ENCODE measurements at regions of chr12 and their contacts with region 1.

Region 1: GRCh38 chr12:25386831-25387731 is 136.4 kb upstream of the KRAS start:
- DNase-seq: peak; percentile 92
- ATAC-seq: peak; percentile 8; the same call in 1 of the 2 replicates
- H3K4me3 ChIP-seq: peak overlapping the region; percentile 55
- H3K27ac ChIP-seq: peak overlapping the region; percentile 85
- H3K4me1 ChIP-seq: no peaks in the 10 kb centered on the region; the same call in 1 of the 2 replicates
- H3K27me3 ChIP-seq: no peaks in the 10 kb centered on the region
- CTCF ChIP-seq: peak; percentile 95
- POLR2A ChIP-seq: peak; percentile 78
- RAD21 ChIP-seq: peak; percentile 89

Region 2: DNA sequence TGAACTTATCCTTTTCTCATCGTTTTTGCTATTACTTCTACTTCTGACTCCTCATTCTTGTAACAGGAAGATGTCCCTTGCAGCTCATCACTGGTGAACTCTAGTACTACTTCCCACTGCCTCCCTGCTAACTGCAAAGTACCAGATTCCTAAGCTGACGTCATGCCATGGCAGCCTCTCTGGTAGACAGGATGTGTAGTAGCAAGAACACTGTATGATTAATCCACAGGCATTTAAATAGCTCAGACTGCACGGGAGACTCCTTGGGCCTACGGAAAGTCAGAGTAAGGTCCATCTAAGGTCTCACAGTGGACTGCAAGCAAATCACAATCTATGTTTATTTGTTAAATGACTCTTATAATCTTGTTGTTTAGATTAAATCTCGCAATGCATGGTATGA is 235.6 kb before region 1 on chr12:
- CTCF ChIA-PET with region 1: no interaction called
- POLR2A ChIA-PET with region 1: no interaction called
- dilution Hi-C with region 1: no loop called
- in situ Hi-C with region 1: no loop called
- intact Hi-C with region 1: loop called (anchors 1 kb)
- DNase-seq: peak; percentile 100
- ATAC-seq: peak; percentile 98
- H3K4me3 ChIP-seq: no peak overlapping the region
- H3K27ac ChIP-seq: peak overlapping the region; percentile 92
- H3K4me1 ChIP-seq: peaks cover 16% of the 10 kb centered on the region
- H3K27me3 ChIP-seq: no peaks in the 10 kb centered on the region
- CTCF ChIP-seq: no peak
- POLR2A ChIP-seq: no peak
- RAD21 ChIP-seq: peak; percentile 15

Region 3: DNA sequence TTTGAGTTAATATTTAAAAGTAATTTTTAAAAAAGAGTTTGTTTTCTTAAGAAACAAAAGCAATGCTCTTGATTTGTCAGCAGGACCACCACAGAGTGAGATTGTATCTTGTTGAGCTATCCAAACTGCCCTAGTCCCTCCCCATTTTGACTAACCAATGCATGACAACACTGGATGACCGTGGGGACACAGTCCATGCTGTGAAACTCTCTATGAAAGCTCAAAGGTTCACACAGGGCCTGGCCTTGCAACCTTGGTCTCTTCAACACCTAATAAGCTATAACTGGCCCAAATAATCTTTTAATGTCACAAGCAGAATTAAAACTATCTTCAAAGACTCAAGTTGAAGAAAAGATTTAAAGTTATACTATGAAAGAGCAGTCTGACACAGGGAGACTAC is 178.5 kb before region 1 on chr12:
- CTCF ChIA-PET with region 1: interaction called, 3 read pairs
- POLR2A ChIA-PET with region 1: no interaction called
- dilution Hi-C with region 1: no loop called
- in situ Hi-C with region 1: no loop called
- intact Hi-C with region 1: loop called (anchors 1 kb)
- DNase-seq: no peak
- ATAC-seq: no peak
- H3K4me3 ChIP-seq: no peak overlapping the region
- H3K27ac ChIP-seq: no peak overlapping the region; the same call in 1 of the 2 replicates
- H3K4me1 ChIP-seq: no peaks in the 10 kb centered on the region
- H3K27me3 ChIP-seq: no peaks in the 10 kb centered on the region
- CTCF ChIP-seq: no peak
- POLR2A ChIP-seq: no peak
- RAD21 ChIP-seq: no peak

Region 4: DNA sequence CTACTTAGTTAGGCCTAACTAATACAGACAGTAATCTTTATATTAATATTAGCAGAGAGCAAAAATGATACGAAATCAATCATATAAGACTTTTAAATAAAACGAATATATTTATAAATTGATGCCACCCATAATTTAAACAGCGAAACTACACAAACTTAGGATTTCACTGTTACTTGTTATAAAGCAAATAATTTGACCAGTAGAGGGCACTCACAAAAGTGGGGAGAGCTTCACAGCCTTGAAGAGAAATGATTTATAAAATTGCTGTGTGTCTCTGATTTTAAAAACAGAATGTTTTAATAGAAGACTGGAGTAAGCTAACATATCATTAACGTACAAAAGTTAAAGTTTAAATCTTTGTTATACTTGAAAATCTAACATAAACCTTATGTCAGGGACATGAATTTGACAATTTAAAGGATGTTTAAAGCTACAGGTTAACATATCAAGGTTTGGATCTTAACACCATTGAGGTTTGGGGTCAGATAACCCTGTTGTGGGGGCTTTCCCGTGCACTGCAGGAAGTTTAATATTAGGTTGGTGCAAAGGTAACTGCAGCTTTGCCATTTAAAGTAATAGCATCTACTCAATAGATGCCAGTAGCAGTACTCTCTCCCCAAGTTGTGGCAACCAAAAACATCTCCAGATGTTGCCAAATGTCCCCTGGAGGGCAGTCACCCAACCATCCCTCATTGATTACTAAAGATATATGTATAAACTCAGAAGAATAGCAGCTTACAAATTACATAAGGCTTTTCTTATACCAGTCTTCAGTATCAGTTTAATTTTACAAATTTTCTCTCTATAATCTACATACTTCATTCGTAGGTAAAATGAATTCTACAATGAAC is 145.7 kb before region 1 on chr12:
- CTCF ChIA-PET with region 1: interaction called, 3 read pairs
- POLR2A ChIA-PET with region 1: no interaction called
- dilution Hi-C with region 1: no loop called
- in situ Hi-C with region 1: loop called (anchors 5 kb)
- intact Hi-C with region 1: loop called (anchors 1 kb)
- DNase-seq: peak; percentile 71
- ATAC-seq: peak; percentile 68
- H3K4me3 ChIP-seq: no peak overlapping the region
- H3K27ac ChIP-seq: peak overlapping the region; percentile 13; the same call in 1 of the 2 replicates
- H3K4me1 ChIP-seq: peaks cover 5% of the 10 kb centered on the region
- H3K27me3 ChIP-seq: no peaks in the 10 kb centered on the region
- CTCF ChIP-seq: peak; percentile 70
- POLR2A ChIP-seq: no peak
- RAD21 ChIP-seq: peak; percentile 68

Region 5: DNA sequence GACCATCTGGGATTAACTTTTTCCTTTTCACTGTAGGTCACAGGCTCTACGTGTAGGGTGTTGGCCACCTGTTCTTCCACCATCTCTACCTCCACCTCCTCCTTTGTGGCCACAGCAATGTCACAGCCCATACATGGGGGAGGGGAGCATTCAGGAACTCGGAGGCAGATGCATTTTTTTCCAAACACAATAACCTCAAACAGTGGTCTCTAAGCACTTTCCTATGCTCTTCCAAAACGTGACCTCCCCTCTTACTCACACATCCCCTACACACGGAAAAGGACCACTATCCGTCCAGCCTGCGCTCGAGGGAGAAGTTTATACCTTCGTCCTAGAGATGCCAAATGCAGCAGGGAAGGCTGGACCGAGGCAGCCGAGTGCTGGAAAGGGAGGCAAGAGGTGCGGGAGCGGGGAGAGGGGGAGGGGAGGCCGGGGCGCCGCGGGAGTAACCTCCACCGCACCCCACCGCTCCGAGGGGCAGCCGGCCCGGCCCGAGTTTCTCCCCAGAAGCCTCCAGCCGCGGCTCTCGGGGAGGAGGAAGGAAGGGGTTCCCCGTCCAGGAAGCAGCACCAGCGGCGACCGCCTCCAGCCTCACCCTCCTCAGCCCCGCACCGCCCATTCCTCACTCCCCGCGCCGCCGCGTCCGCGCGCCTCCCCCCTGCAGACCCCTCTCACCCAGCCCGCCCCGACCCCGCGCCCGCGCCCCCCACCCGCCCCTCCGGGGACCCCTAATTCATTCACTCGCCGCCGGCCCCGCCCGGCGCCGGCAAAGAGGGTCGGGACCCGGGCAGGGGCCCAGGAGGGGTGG is 136.9 kb before region 1 on chr12:
- CTCF ChIA-PET with region 1: interaction called, 3 read pairs
- POLR2A ChIA-PET with region 1: no interaction called
- dilution Hi-C with region 1: no loop called
- in situ Hi-C with region 1: loop called (anchors 5 kb)
- intact Hi-C with region 1: no loop called
- DNase-seq: peak; percentile 20
- ATAC-seq: peak; percentile 42
- H3K4me3 ChIP-seq: peak overlapping the region; percentile 95
- H3K27ac ChIP-seq: peak overlapping the region; percentile 94
- H3K4me1 ChIP-seq: peaks cover 5% of the 10 kb centered on the region; the same call in 1 of the 2 replicates
- H3K27me3 ChIP-seq: no peaks in the 10 kb centered on the region
- CTCF ChIP-seq: no peak
- POLR2A ChIP-seq: no peak
- RAD21 ChIP-seq: no peak; the same call in 1 of the 2 replicates

Region 6: GRCh38 chr12:25347716-25348271 is 39.3 kb before region 1 on chr12:
- CTCF ChIA-PET with region 1: no interaction called
- POLR2A ChIA-PET with region 1: no interaction called
- dilution Hi-C with region 1: no loop called
- in situ Hi-C with region 1: no loop called
- intact Hi-C with region 1: loop called (anchors 5 kb)
- DNase-seq: no peak
- ATAC-seq: no peak
- H3K4me3 ChIP-seq: no peak overlapping the region
- H3K27ac ChIP-seq: no peak overlapping the region
- H3K4me1 ChIP-seq: peaks cover 4% of the 10 kb centered on the region
- H3K27me3 ChIP-seq: no peaks in the 10 kb centered on the region
- CTCF ChIP-seq: no peak
- POLR2A ChIP-seq: no peak
- RAD21 ChIP-seq: no peak

Region 7: DNA sequence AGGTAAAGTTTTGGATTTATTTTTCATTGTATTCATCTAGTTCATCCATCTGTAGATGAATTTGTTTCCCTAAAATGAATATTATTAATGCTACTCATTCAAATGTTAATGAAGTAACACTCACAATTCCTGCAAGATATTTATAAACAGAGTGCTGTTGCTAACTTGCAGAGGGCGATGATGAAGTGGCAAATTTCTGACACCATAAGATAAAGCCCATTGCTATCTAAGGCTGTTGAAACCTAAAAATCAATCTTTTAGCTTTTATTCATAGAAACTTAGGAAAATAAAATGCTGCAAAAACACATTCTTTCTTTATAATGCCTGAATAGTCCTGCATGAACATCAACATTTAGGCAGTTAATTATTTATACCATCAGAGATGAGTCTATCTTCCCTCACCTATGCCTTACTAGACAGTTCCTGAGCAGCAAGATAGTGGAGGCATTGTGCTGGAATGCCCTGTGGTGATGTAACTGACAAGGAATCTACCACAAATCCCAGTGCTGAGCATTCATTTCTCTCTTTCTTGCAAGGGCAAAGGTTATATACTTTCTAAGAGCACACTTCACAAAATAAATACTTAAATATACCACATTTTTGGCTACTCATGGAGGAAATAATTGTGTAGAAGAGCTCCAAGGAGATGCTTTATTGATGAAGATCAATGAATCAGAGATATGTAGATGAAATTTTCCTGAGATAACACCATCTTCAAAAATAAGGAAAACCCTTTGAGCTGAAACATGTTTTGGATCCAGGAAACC is 108.4 kb after region 1 on chr12:
- CTCF ChIA-PET with region 1: no interaction called
- POLR2A ChIA-PET with region 1: no interaction called
- dilution Hi-C with region 1: no loop called
- in situ Hi-C with region 1: no loop called
- intact Hi-C with region 1: no loop called
- DNase-seq: peak; percentile 89
- ATAC-seq: peak; percentile 99
- H3K4me3 ChIP-seq: no peak overlapping the region
- H3K27ac ChIP-seq: no peak overlapping the region; the same call in 1 of the 2 replicates
- H3K4me1 ChIP-seq: peaks cover 2% of the 10 kb centered on the region; the same call in 1 of the 2 replicates
- H3K27me3 ChIP-seq: no peaks in the 10 kb centered on the region
- CTCF ChIP-seq: no peak
- POLR2A ChIP-seq: no peak
- RAD21 ChIP-seq: no peak